B cell (primary cell): ENCODE measurements at regions of chr17 and their contacts with region 1.

Region 1: GRCh38 chr17:59859444-59860025 is 33.2 kb downstream of the TUBD1 start:
- DNase-seq: peak; percentile 54
- ATAC-seq: peak; percentile 53
- H3K4me3 ChIP-seq: no peak overlapping the region
- H3K4me3 Mint-ChIP-seq: no peak overlapping the region
- H3K27ac ChIP-seq: no peak overlapping the region
- H3K27ac Mint-ChIP-seq: peak overlapping the region; percentile 37
- H3K4me1 ChIP-seq: no peaks in the 10 kb centered on the region
- H3K4me1 Mint-ChIP-seq: no peaks in the 10 kb centered on the region
- H3K27me3 ChIP-seq: no peaks in the 10 kb centered on the region
- H3K27me3 Mint-ChIP-seq: no peaks in the 10 kb centered on the region
- CTCF ChIP-seq: peak; percentile 77

Region 2: GRCh38 chr17:59746849-59747445 is 112.6 kb before region 1 on chr17:
- CTCF ChIA-PET with region 1: interaction called, 5 read pairs
- POLR2A ChIA-PET with region 1: interaction called, 6 read pairs
- intact Hi-C with region 1: loop called (anchors 1 kb)
- DNase-seq: peak; percentile 45
- ATAC-seq: peak; percentile 36
- H3K4me3 ChIP-seq: no peak overlapping the region
- H3K4me3 Mint-ChIP-seq: no peak overlapping the region
- H3K27ac ChIP-seq: no peak overlapping the region
- H3K27ac Mint-ChIP-seq: no peak overlapping the region
- H3K4me1 ChIP-seq: peaks cover 0 to 1% of the 10 kb centered on the region in 2 donors
- H3K4me1 Mint-ChIP-seq: no peaks in the 10 kb centered on the region
- H3K27me3 ChIP-seq: no peaks in the 10 kb centered on the region
- H3K27me3 Mint-ChIP-seq: no peaks in the 10 kb centered on the region
- CTCF ChIP-seq: peak; percentile 79

Region 3: DNA sequence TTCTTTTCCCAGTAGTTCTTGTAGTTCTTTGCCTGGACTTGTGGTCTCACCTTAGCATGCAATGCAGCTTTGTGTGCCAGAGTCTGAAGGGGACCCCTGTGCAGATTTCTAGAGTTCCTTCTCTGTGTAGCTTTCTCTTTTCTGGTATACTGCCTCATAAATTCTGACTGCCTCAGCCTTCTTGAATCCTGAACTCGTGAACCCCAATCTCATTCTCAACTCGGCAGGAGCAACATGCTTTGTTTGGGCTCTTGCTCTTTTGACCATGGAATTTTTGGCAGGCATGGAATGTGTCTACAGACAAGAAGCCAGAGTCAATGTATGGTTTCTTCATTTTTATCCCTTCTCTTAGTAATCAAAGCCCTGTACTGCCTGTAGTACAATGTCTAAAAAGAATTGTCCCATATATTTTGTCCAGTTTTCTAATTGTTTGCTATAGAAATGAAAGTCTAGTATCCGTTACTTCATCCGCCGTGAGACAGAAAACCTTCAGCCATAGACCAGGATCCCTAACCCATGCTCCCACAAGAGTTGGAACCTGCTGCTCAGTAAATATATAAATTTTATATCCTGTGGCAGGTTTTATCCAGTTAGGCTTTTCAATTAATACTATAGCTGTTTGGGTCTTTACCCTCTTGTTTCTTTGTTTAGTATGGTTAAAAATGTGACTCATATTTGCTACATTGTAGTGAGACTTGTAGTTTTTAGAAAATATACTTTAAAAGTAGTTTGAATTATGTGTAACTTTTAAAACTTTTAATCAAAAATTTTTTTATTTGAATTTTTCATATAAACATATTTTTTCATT is 97.6 kb before region 1 on chr17:
- CTCF ChIA-PET with region 1: interaction called, 10 read pairs
- POLR2A ChIA-PET with region 1: no interaction called
- intact Hi-C with region 1: no loop called
- DNase-seq: no peak
- ATAC-seq: no peak
- H3K4me3 ChIP-seq: no peak overlapping the region
- H3K4me3 Mint-ChIP-seq: no peak overlapping the region
- H3K27ac ChIP-seq: no peak overlapping the region
- H3K27ac Mint-ChIP-seq: no peak overlapping the region
- H3K4me1 ChIP-seq: no peaks in the 10 kb centered on the region
- H3K4me1 Mint-ChIP-seq: peaks cover 5% of the 10 kb centered on the region
- H3K27me3 ChIP-seq: no peaks in the 10 kb centered on the region
- H3K27me3 Mint-ChIP-seq: no peaks in the 10 kb centered on the region
- CTCF ChIP-seq: no peak

Region 4: DNA sequence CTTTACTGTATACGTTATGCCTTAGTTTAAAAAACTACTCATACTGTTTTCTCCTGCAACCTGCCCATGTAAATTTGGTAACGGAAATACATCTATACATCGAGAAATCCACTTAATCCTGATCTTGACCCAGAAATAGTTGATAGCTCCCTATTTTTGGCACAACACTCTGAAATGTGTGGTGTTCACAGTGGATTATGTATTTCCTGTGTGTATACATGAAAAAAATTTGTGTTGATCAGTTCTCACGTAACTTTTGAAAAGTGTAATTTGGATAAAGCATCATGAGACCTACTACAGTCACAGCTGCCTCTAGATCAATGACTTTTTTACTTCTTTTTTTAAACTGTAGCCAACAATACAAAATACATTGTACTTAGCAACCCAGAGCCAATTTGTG is 61.4 kb before region 1 on chr17:
- CTCF ChIA-PET with region 1: no interaction called
- POLR2A ChIA-PET with region 1: no interaction called
- intact Hi-C with region 1: no loop called
- DNase-seq: no peak
- ATAC-seq: no peak
- H3K4me3 ChIP-seq: no peak overlapping the region
- H3K4me3 Mint-ChIP-seq: no peak overlapping the region
- H3K27ac ChIP-seq: no peak overlapping the region
- H3K27ac Mint-ChIP-seq: no peak overlapping the region
- H3K4me1 ChIP-seq: no peaks in the 10 kb centered on the region
- H3K4me1 Mint-ChIP-seq: no peaks in the 10 kb centered on the region
- H3K27me3 ChIP-seq: no peaks in the 10 kb centered on the region
- H3K27me3 Mint-ChIP-seq: no peaks in the 10 kb centered on the region
- CTCF ChIP-seq: no peak